ENCODE measurements at regions of chr14 and their contacts with region 1.

Region 1: DNA sequence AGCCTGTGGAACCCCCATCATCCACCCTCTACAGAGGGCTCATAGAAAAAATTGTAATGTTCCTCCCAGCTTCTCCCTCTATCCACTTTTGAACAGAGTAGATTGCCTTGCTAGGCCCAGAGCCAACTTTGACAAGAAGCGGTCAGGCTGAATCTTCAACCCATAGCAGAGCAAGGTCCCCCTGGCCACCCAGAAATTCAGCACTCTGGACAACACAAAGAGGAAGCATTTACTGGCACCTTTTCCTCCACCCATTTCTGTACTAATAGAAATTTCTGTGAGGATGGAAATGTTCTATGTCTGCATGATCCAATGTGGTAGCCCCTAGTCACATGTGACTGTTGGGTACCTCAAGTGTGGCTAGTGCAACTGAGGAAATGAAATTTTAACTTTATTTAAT is 42.7 kb upstream of the OXA1L start:
- DNase-seq: no peak
- ATAC-seq: no peak
- H3K4me3 ChIP-seq: no peak overlapping the region
- H3K4me3 Mint-ChIP-seq: no peak overlapping the region
- H3K27ac ChIP-seq: no peak overlapping the region
- H3K27ac Mint-ChIP-seq: no peak overlapping the region
- H3K4me1 ChIP-seq: no peaks in the 10 kb centered on the region
- H3K4me1 Mint-ChIP-seq: no peaks in the 10 kb centered on the region
- H3K27me3 ChIP-seq: no peaks in the 10 kb centered on the region
- H3K27me3 Mint-ChIP-seq: peaks cover 2% of the 10 kb centered on the region
- CTCF ChIP-seq: no peak

Region 2: DNA sequence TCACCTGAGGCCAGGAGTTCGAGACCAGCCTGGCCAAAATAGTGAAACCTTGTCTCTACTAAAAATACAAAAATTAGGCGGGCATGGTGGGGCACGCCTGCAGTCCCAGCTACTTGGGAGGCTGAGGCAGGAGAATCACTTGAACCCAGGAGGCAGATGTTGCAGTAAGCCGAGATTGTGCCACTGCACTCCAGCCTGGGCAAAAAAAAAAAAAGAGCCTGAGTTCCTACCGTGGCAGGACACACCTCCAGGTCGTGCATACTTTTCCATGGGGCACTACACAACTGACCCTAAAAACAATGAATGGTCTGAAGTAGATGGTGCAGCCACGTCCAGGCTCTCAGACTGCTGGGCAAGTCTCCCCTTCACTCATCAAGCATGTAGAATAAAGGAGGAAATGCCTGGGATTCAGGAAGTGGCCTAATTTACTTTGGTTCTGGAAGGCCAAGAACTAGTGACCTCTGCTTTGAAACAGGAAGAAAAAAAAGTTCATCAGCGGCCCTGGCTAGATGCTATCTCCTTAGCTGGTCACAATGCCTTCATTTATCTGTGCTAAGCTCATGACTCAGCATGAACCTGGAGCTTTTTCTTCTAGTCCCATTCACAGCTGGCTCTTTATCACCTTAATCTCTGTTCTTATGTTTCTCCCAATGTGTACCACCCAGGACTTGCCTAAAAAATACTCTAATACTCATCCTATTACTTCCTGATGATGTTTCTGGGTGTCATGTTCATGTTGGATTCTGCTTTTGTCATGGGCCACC is 23.8 kb before region 1 on chr14:
- CTCF ChIA-PET with region 1: interaction called, 3 read pairs
- POLR2A ChIA-PET with region 1: no interaction called
- intact Hi-C with region 1: loop called in 1 of 2 experiments (anchors 2 kb)
- DNase-seq: no peak
- ATAC-seq: no peak
- H3K4me3 ChIP-seq: no peak overlapping the region
- H3K4me3 Mint-ChIP-seq: no peak overlapping the region
- H3K27ac ChIP-seq: no peak overlapping the region
- H3K27ac Mint-ChIP-seq: no peak overlapping the region
- H3K4me1 ChIP-seq: no peaks in the 10 kb centered on the region
- H3K4me1 Mint-ChIP-seq: no peaks in the 10 kb centered on the region
- H3K27me3 ChIP-seq: peaks cover 2 to 3% of the 10 kb centered on the region in 2 experiments
- H3K27me3 Mint-ChIP-seq: peaks cover 28% of the 10 kb centered on the region
- CTCF ChIP-seq: no peak